Head of caudate nucleus (tissue), 42 donors: ENCODE measurements at regions of chr12 and their contacts with region 1.

Region 1: DNA sequence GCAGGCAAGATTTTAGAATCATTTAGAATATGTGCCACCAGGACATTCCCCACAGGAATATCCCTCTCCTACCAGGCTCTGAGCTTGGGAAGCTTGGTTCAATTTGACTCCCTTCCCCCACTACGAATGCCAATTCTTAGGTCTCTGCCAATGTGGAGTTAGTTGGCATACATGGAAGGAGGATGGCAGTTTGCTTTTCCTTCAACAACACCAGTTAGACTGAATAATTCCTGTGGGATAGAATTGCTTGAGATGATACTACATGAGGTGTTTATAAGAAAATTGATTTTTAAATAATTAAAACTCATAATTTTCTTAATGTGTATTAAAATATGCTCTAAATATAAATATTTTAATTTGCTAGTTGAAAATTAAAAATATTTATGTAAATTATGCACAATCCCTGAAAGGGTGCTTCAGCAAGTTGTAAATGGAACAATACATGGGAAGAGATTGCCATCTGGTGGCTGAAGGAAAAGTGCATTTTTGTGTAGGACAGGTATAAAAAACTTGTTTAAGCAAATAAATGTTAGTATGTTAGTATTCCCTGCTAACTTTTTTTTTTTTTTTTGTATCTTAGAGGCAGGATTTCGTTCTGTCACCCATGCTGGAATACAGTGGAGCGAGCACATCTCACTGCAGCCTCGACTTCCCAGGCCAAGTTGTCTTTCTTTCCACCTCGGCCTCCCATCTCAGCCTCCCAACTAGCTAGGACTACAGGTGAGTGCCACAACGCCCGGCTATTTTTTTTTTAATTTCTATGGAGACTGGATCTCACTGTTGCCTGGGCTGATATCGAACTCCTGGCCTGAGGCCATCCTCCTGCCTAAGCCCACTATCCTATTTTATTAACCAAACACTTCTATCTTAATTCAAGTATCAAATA is 25.8 kb upstream of the STRAP start:
- DNase-seq: peak in 29 of 42 donors; percentile 21 to 87 (median 65)

Region 2: GRCh38 chr12:15590180-15590826 is 266.0 kb before region 1 on chr12:
- intact Hi-C with region 1: loop called (anchors 2 kb)
- DNase-seq: peak; percentile 44 to 94 (median 80)